Natural killer cell (primary cell): ENCODE measurements at regions of chr6 and their contacts with region 1.

Region 1: GRCh38 chr6:137707590-137708360 is 159.3 kb upstream of the TNFAIP3 start:
- DNase-seq: peak; percentile 78 to 97
- ATAC-seq: peak; percentile 75 to 89 (median 84)
- H3K4me3 ChIP-seq: no peak overlapping the region
- H3K4me3 Mint-ChIP-seq: peak overlapping the region; percentile 82
- H3K27ac ChIP-seq: peak overlapping the region; percentile 85
- H3K27ac Mint-ChIP-seq: peak overlapping the region; percentile 91 to 96
- H3K4me1 ChIP-seq: peaks cover 34% of the 10 kb centered on the region
- H3K4me1 Mint-ChIP-seq: peaks cover 64 to 65% of the 10 kb centered on the region in 2 donors
- H3K27me3 ChIP-seq: no peaks in the 10 kb centered on the region
- H3K27me3 Mint-ChIP-seq: peaks cover 0 to 10% of the 10 kb centered on the region in 2 donors
- CTCF ChIP-seq: peak; percentile 84

Region 2: DNA sequence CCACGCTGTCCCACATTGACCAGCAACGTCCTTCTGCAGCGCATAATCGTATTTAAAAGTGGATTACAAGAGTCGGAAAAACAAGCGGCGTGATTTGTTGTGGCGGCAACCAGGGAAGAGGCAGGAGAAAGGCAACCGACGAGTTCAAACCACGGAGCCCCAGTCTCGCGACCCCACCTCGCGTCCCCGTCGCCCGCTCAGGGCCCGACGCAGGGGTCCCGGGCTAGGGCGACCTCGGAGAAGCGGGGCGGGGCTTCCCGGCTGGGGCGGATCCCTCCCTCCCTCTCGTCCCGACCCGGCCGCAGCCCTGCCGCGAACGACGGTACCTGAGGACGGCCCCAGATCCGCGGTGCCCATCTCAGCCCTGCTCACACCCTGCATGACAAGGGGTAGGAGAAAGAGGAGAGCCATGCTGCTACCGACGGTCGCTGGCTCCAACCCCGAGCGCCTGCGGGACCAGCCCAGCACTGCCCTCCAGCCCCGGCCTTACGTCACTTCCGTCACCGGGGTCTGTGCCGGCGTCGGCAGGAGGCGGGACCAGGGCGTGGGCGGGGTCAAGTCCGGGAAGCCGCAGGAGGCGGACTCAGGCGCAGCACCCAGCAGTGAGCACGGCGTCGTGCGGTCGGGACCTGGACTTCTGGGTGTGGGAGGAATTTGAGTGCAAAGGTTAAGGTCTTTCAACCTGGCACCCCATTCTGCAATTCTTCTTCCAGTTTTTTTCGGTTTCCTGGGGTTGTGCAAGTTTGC is 488.7 kb before region 1 on chr6 and contains the start of gene IFNGR1:
- intact Hi-C with region 1: loop called (anchors 5 kb)
- DNase-seq: peak; percentile 96 to 97
- ATAC-seq: peak; percentile 82 to 93 (median 91)
- H3K4me3 ChIP-seq: peak within 1 kb of the TSS; percentile 78
- H3K4me3 Mint-ChIP-seq: peak within 1 kb of the TSS; percentile 100
- H3K27ac ChIP-seq: peak within 1 kb of the TSS; percentile 93
- H3K27ac Mint-ChIP-seq: peak within 1 kb of the TSS; percentile 99
- H3K4me1 ChIP-seq: peaks cover 45% of the 10 kb centered on the region
- H3K4me1 Mint-ChIP-seq: peaks cover 64 to 65% of the 10 kb centered on the region in 2 donors
- H3K27me3 ChIP-seq: no peaks in the 10 kb centered on the region
- H3K27me3 Mint-ChIP-seq: no peaks in the 10 kb centered on the region
- CTCF ChIP-seq: no peak
- total RNA-seq, gene IFNGR1: 77.5 to 128 (median 100) TPM

Region 3: GRCh38 chr6:137794516-137795201 is 86.9 kb after region 1 on chr6:
- intact Hi-C with region 1: loop called (anchors 1 kb)
- DNase-seq: no peak
- ATAC-seq: peak in 2 of 3 donors; percentile 46 to 54
- H3K4me3 ChIP-seq: no peak overlapping the region
- H3K4me3 Mint-ChIP-seq: peak overlapping the region; percentile 43
- H3K27ac ChIP-seq: peak overlapping the region; percentile 30
- H3K27ac Mint-ChIP-seq: peak overlapping the region; percentile 77 to 86
- H3K4me1 ChIP-seq: peaks cover 30% of the 10 kb centered on the region
- H3K4me1 Mint-ChIP-seq: peaks cover 40 to 42% of the 10 kb centered on the region in 2 donors
- H3K27me3 ChIP-seq: no peaks in the 10 kb centered on the region
- H3K27me3 Mint-ChIP-seq: no peaks in the 10 kb centered on the region
- CTCF ChIP-seq: no peak

Region 4: DNA sequence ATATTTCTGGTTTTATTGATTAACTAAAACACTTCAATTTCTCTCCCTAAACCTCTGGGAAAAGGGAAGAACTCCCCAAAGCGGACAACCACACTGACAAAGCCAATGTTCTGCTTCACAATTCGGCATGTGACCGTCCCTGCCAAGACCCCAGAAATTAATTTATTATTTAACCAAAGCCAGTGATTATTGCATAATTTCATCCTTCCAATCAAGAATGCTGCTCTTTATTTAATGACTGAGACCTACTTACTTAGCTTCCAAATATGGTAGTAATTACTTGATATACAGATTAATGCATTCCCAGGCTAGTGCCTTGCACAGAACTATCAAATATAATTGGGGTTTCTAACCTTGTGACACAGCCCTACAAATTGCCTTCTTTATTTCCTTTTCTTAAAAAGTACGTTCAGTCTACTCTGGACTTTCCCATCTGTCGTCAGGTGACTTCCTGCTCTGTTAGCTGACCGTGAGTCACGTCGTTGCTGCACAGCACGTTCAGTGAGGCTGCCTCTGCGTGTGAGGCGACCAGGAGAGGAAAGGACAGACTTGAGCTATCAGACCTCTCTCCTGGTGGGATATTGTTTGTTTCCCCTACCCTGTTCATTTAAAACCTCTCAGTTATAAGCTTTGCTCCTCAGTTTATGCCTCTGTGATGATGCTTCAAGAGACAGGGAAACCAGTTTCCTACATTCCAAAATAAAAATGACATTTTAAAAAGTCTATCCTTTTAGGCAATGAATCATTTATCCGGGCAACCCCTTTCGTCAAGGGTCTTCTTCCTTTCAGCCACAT is 103.5 kb after region 1 on chr6:
- intact Hi-C with region 1: loop called (anchors 1 kb)
- DNase-seq: peak; percentile 71 to 95
- ATAC-seq: peak; percentile 86 to 96 (median 93)
- H3K4me3 ChIP-seq: no peak overlapping the region
- H3K4me3 Mint-ChIP-seq: peak overlapping the region; percentile 77
- H3K27ac ChIP-seq: peak overlapping the region; percentile 77
- H3K27ac Mint-ChIP-seq: peak overlapping the region; percentile 79 to 94
- H3K4me1 ChIP-seq: peaks cover 23% of the 10 kb centered on the region
- H3K4me1 Mint-ChIP-seq: peaks cover 32 to 33% of the 10 kb centered on the region in 2 donors
- H3K27me3 ChIP-seq: no peaks in the 10 kb centered on the region
- H3K27me3 Mint-ChIP-seq: no peaks in the 10 kb centered on the region
- CTCF ChIP-seq: no peak

Region 5: GRCh38 chr6:137866914-137867684 is 159.3 kb after region 1 on chr6 and contains the start of gene TNFAIP3:
- intact Hi-C with region 1: loop called (anchors 1 kb)
- DNase-seq: peak; percentile 94 to 98
- ATAC-seq: peak; percentile 76 to 93 (median 80)
- H3K4me3 ChIP-seq: peak within 1 kb of the TSS; percentile 99
- H3K4me3 Mint-ChIP-seq: peak within 1 kb of the TSS; percentile 98
- H3K27ac ChIP-seq: peak within 1 kb of the TSS; percentile 97
- H3K27ac Mint-ChIP-seq: peak within 1 kb of the TSS; percentile 96 to 98
- H3K4me1 ChIP-seq: peaks cover 41% of the 10 kb centered on the region
- H3K4me1 Mint-ChIP-seq: peaks cover 53 to 61% of the 10 kb centered on the region in 2 donors
- H3K27me3 ChIP-seq: no peaks in the 10 kb centered on the region
- H3K27me3 Mint-ChIP-seq: no peaks in the 10 kb centered on the region
- CTCF ChIP-seq: peak; percentile 78
- total RNA-seq, gene TNFAIP3: 1,163 to 1,298 (median 1,241) TPM

Region 6: GRCh38 chr6:137975188-137975940 is 267.6 kb after region 1 on chr6:
- intact Hi-C with region 1: loop called (anchors 1 kb)
- DNase-seq: peak in 1 of 2 donors; percentile 82
- ATAC-seq: peak; percentile 84 to 90 (median 87)
- H3K4me3 ChIP-seq: peak overlapping the region; percentile 15
- H3K4me3 Mint-ChIP-seq: peak overlapping the region; percentile 90
- H3K27ac ChIP-seq: peak overlapping the region; percentile 93
- H3K27ac Mint-ChIP-seq: peak overlapping the region; percentile 87 to 97
- H3K4me1 ChIP-seq: peaks cover 66% of the 10 kb centered on the region
- H3K4me1 Mint-ChIP-seq: peaks cover 64 to 74% of the 10 kb centered on the region in 2 donors
- H3K27me3 ChIP-seq: no peaks in the 10 kb centered on the region
- H3K27me3 Mint-ChIP-seq: no peaks in the 10 kb centered on the region
- CTCF ChIP-seq: peak; percentile 60

Region 7: DNA sequence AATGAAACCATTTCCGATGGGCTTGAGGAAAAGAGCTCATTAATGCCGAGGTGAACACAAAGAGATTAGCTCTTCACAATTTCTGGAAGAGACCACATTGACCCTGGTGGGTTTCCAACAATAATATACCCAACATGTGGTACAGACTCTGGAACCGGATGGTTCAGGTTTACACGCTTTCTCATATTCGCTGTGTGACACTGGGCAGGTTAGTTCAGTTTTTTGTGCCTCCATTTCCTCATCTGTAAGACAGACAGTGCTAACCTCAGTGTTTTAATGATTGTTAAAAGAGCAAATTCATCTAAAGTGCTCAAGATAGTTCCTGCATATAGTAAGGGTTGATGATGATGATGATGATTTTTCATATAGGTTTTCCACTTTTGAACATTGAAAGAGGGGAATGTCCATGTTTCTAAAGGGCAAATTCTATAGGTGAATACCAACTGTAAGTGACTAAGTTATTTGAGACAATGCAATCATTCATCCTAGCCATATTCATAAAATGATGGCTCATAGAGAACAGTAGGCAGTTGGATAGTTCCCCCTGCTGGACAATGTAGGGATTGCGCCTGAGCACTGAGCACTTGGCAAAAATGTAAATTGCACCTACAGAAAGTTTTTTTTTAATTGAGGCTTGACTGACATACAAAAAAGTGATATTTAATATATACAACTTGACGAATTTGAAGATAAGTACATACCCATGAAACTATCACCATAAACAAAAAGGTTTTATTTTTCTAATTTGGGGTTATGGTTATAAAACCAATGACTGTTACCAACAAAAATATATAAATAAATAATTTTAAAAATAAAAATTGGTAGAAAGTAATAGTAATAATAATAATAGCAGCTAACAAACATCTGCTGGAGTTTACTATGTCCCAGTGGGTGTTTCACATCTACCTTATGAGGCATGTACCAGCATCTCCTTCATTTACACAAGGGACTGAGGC is 401.5 kb after region 1 on chr6:
- intact Hi-C with region 1: loop called (anchors 1 kb)
- DNase-seq: peak; percentile 69 to 90
- ATAC-seq: peak; percentile 73 to 83 (median 74)
- H3K4me3 ChIP-seq: no peak overlapping the region
- H3K4me3 Mint-ChIP-seq: peak overlapping the region; percentile 38
- H3K27ac ChIP-seq: no peak overlapping the region
- H3K27ac Mint-ChIP-seq: no peak overlapping the region
- H3K4me1 ChIP-seq: peaks cover 13% of the 10 kb centered on the region
- H3K4me1 Mint-ChIP-seq: peaks cover 8 to 23% of the 10 kb centered on the region in 2 donors
- H3K27me3 ChIP-seq: peaks cover 34% of the 10 kb centered on the region
- H3K27me3 Mint-ChIP-seq: peaks cover 44% of the 10 kb centered on the region in 2 donors
- CTCF ChIP-seq: peak; percentile 93